HepG2 (cell line): ENCODE measurements at regions of chr10 and their contacts with region 1.

Region 1: GRCh38 chr10:95601116-95601719 is 40.0 kb upstream of the SORBS1 start:
- DNase-seq: peak; percentile 84
- ATAC-seq: peak; percentile 88
- H3K4me3 ChIP-seq: no peak overlapping the region
- H3K27ac ChIP-seq: no peak overlapping the region
- H3K4me1 ChIP-seq: peaks cover 48% of the 10 kb centered on the region
- H3K27me3 ChIP-seq: no peaks in the 10 kb centered on the region; a peak in 1 of 5 replicates
- CTCF ChIP-seq: peak; percentile 97
- EP300 ChIP-seq: no peak
- POLR2A ChIP-seq: no peak
- RAD21 ChIP-seq: peak; percentile 96

Region 2: GRCh38 chr10:95374597-95375209 is 226.5 kb before region 1 on chr10:
- CTCF ChIA-PET with region 1: interaction called, 19 read pairs
- POLR2A ChIA-PET with region 1: no interaction called
- in situ Hi-C with region 1: loop called (anchors 5 kb)
- intact Hi-C with region 1: loop called (anchors 1 kb)
- DNase-seq: peak; percentile 79
- ATAC-seq: peak; percentile 99
- H3K4me3 ChIP-seq: no peak overlapping the region
- H3K27ac ChIP-seq: no peak overlapping the region
- H3K4me1 ChIP-seq: no peaks in the 10 kb centered on the region
- H3K27me3 ChIP-seq: no peaks in the 10 kb centered on the region
- CTCF ChIP-seq: peak; percentile 96
- EP300 ChIP-seq: no peak
- POLR2A ChIP-seq: no peak
- RAD21 ChIP-seq: peak; percentile 82

Region 3: DNA sequence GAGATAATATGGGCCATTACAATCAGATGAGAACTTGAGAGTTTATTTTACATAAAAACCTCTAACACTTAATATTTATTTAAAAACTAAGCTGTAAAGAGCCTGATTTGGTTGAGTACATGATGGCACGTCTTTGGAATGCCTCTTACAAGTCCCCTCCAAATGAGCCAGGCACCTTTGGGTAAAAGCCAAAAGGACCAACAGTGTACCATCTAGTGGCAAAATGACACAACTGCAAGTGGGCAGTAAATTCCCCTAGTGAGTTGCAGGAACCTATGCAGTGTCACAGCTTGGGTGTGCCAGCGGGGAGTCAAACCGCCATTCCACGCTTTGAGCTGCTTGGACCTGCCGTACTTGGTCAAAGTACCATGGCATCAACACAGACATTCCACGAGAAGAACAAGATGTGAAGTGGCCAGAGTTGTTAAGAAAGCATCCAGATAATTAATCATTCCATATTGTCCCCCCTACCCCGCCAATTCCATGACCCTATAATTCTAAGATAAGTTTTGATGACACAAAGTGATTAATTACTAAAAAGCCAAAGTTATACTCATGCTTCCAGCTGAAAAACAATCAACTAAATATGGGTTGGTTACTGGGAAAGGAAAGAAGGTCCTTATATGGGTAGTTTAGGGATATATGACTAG is 155.3 kb before region 1 on chr10:
- CTCF ChIA-PET with region 1: interaction called, 10 read pairs
- POLR2A ChIA-PET with region 1: no interaction called
- in situ Hi-C with region 1: no loop called
- intact Hi-C with region 1: no loop called
- DNase-seq: peak; percentile 60
- ATAC-seq: peak; percentile 82
- H3K4me3 ChIP-seq: no peak overlapping the region
- H3K27ac ChIP-seq: peak overlapping the region; percentile 11
- H3K4me1 ChIP-seq: peaks cover 98% of the 10 kb centered on the region
- H3K27me3 ChIP-seq: no peaks in the 10 kb centered on the region
- CTCF ChIP-seq: peak; percentile 79
- EP300 ChIP-seq: no peak
- POLR2A ChIP-seq: no peak
- RAD21 ChIP-seq: peak; percentile 57

Region 4: GRCh38 chr10:95501203-95502094 is 99.8 kb before region 1 on chr10:
- CTCF ChIA-PET with region 1: no interaction called
- POLR2A ChIA-PET with region 1: no interaction called
- in situ Hi-C with region 1: no loop called
- intact Hi-C with region 1: loop called (anchors 5 kb)
- DNase-seq: peak; percentile 38
- ATAC-seq: peak; percentile 81
- H3K4me3 ChIP-seq: peak overlapping the region in 2 of 3 experiments; percentile 17 to 24; a peak in 1 of 6 replicates
- H3K27ac ChIP-seq: peak overlapping the region; percentile 70
- H3K4me1 ChIP-seq: peaks cover 73% of the 10 kb centered on the region
- H3K27me3 ChIP-seq: no peaks in the 10 kb centered on the region
- CTCF ChIP-seq: no peak
- EP300 ChIP-seq: no peak; a peak in 1 of 4 replicates
- POLR2A ChIP-seq: no peak
- RAD21 ChIP-seq: no peak; the same call in 1 of the 2 replicates

Region 5: GRCh38 chr10:95579835-95580535 is 21.2 kb before region 1 on chr10:
- CTCF ChIA-PET with region 1: no interaction called
- POLR2A ChIA-PET with region 1: no interaction called
- in situ Hi-C with region 1: no loop called
- intact Hi-C with region 1: no loop called
- DNase-seq: no peak
- ATAC-seq: no peak
- H3K4me3 ChIP-seq: no peak overlapping the region
- H3K27ac ChIP-seq: no peak overlapping the region
- H3K4me1 ChIP-seq: no peaks in the 10 kb centered on the region
- H3K27me3 ChIP-seq: no peaks in the 10 kb centered on the region
- CTCF ChIP-seq: no peak
- EP300 ChIP-seq: no peak
- POLR2A ChIP-seq: no peak
- RAD21 ChIP-seq: no peak

Region 6: GRCh38 chr10:95656291-95657164 is 55.3 kb after region 1 on chr10 and contains the start of gene ALDH18A1:
- CTCF ChIA-PET with region 1: no interaction called
- POLR2A ChIA-PET with region 1: no interaction called
- in situ Hi-C with region 1: no loop called
- intact Hi-C with region 1: no loop called
- DNase-seq: peak; percentile 86
- ATAC-seq: peak; percentile 90
- H3K4me3 ChIP-seq: peak within 1 kb of the TSS; percentile 75 to 90 (median 85)
- H3K27ac ChIP-seq: peak within 1 kb of the TSS; percentile 69
- H3K4me1 ChIP-seq: peaks cover 44% of the 10 kb centered on the region
- H3K27me3 ChIP-seq: no peaks in the 10 kb centered on the region; a peak in 1 of 5 replicates
- CTCF ChIP-seq: 0 out of 2 replicates have a peak, but pooled peaks have one; percentile 15
- EP300 ChIP-seq: no peak
- POLR2A ChIP-seq: peak; percentile 34 to 74; a peak in 3 of 4 replicates
- RAD21 ChIP-seq: 0 out of 2 replicates have a peak, but pooled peaks have one; percentile 16
- total RNA-seq, gene ALDH18A1: 98.4 and 263 TPM in 2 replicates